H1 (cell line): ENCODE measurements at regions of chr2 and their contacts with region 1.

Region 1: GRCh38 chr2:96305091-96305978 is at the start of gene SNRNP200:
- DNase-seq: peak; percentile 41 to 89
- H3K4me3 ChIP-seq: peak within 1 kb of the TSS; percentile 79 to 98 (median 86)
- H3K27ac ChIP-seq: peak within 1 kb of the TSS; percentile 82; the same call in 1 of the 2 replicates
- H3K4me1 ChIP-seq: peaks cover 0 to 13% (median 4%) of the 10 kb centered on the region in 4 experiments; a peak in 4 of 7 replicates
- H3K27me3 ChIP-seq: no peaks in the 10 kb centered on the region
- CTCF ChIP-seq: no peak
- EP300 ChIP-seq: 0 out of 3 replicates have a peak, but pooled peaks of 1 of the 2 experiments have one; percentile 4
- POLR2A ChIP-seq: peak; percentile 60 to 85
- RAD21 ChIP-seq: 0 out of 4 replicates have a peak, but pooled peaks of 1 of the 2 experiments have one; percentile 6
- total RNA-seq, gene SNRNP200: 190 and 199 TPM in 2 replicates

Region 2: GRCh38 chr2:96291751-96292150 is 13.6 kb before region 1 on chr2:
- CTCF ChIA-PET with region 1: no interaction called
- POLR2A ChIA-PET with region 1: interaction called, 12 read pairs
- DNase-seq: no peak
- H3K4me3 ChIP-seq: no peak overlapping the region
- H3K27ac ChIP-seq: no peak overlapping the region
- H3K4me1 ChIP-seq: no peaks in the 10 kb centered on the region
- H3K27me3 ChIP-seq: no peaks in the 10 kb centered on the region
- CTCF ChIP-seq: no peak
- EP300 ChIP-seq: no peak
- POLR2A ChIP-seq: no peak
- RAD21 ChIP-seq: no peak

Region 3: GRCh38 chr2:96336104-96336775 is 30.9 kb after region 1 on chr2:
- CTCF ChIA-PET with region 1: interaction called, 3 read pairs
- POLR2A ChIA-PET with region 1: interaction called, 19 read pairs
- DNase-seq: no peak
- H3K4me3 ChIP-seq: peak overlapping the region; percentile 65 to 79 (median 74)
- H3K27ac ChIP-seq: peak overlapping the region; percentile 54
- H3K4me1 ChIP-seq: peaks cover 2 to 5% (median 3%) of the 10 kb centered on the region in 4 experiments; a peak in 4 of 7 replicates
- H3K27me3 ChIP-seq: no peaks in the 10 kb centered on the region
- CTCF ChIP-seq: no peak
- EP300 ChIP-seq: no peak
- POLR2A ChIP-seq: peak; percentile 73 to 82; a peak in 2 of 3 replicates
- RAD21 ChIP-seq: no peak